ENCODE measurements at regions of chr2 and their contacts with region 1.

Region 1: DNA sequence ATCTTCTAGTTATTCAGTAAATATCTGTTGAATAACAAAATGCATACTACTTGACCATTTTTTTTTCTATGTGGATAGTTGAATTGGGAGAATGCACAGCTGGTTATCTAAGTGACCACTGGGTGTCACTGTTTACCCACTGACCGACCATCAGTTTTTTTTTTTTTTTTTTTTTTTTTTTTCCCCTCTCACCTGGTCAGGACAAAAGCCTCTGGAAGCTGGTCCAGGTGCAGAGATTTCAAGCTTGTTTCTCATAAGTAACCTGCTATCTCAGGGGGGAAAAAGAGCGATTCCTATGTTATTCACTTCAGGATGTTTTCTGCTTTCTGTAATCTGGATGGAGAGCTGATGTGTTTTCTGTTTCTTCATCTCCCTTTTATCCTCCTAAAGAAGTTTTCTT is 256.0 kb downstream of the DCDC2C start:
- DNase-seq: peak in 1 of 6 donors; percentile 17
- ATAC-seq: peak in 3 of 4 donors; percentile 39 to 75 (median 57)
- H3K4me3 ChIP-seq: no peak overlapping the region
- H3K27ac ChIP-seq: no peak overlapping the region
- H3K4me1 ChIP-seq: no peaks in the 10 kb centered on the region
- H3K27me3 ChIP-seq: peaks cover 0 to 5% (median 0%) of the 10 kb centered on the region in 4 donors
- CTCF ChIP-seq: peak; percentile 38 to 71 (median 54)

Region 2: GRCh38 chr2:4762951-4763376 is 803.6 kb after region 1 on chr2:
- intact Hi-C with region 1: loop called in 1 of 3 experiments (anchors 10 kb)
- DNase-seq: peak in 5 of 6 donors; percentile 19 to 45 (median 34)
- ATAC-seq: peak in 3 of 4 donors; percentile 71 to 78 (median 71)
- H3K4me3 ChIP-seq: no peak overlapping the region
- H3K27ac ChIP-seq: no peak overlapping the region
- H3K4me1 ChIP-seq: no peaks in the 10 kb centered on the region
- H3K27me3 ChIP-seq: no peaks in the 10 kb centered on the region
- CTCF ChIP-seq: peak in 3 of 4 donors; percentile 14 to 38 (median 22)

Region 3: GRCh38 chr2:4775668-4776067 is 816.3 kb after region 1 on chr2:
- intact Hi-C with region 1: loop called in 1 of 3 experiments (anchors 10 kb)
- DNase-seq: no peak
- ATAC-seq: no peak
- H3K4me3 ChIP-seq: no peak overlapping the region
- H3K27ac ChIP-seq: no peak overlapping the region
- H3K4me1 ChIP-seq: no peaks in the 10 kb centered on the region
- H3K27me3 ChIP-seq: no peaks in the 10 kb centered on the region
- CTCF ChIP-seq: no peak

Region 4: GRCh38 chr2:5365871-5366461 is 1406.6 kb after region 1 on chr2:
- intact Hi-C with region 1: loop called in 1 of 3 experiments (anchors 10 kb)
- DNase-seq: peak; percentile 38 to 91 (median 74)
- ATAC-seq: peak; percentile 81 to 93 (median 89)
- H3K4me3 ChIP-seq: no peak overlapping the region
- H3K27ac ChIP-seq: no peak overlapping the region
- H3K4me1 ChIP-seq: no peaks in the 10 kb centered on the region
- H3K27me3 ChIP-seq: no peaks in the 10 kb centered on the region
- CTCF ChIP-seq: peak; percentile 65 to 85 (median 83)